Prostate gland (tissue), 2 donors: ENCODE measurements at regions of chr14 and their contacts with region 1.

Region 1: GRCh38 chr14:51395361-51395849 is 155.4 kb downstream of the TMX1 start:
- DNase-seq: peak; percentile 80
- H3K4me3 ChIP-seq: no peak overlapping the region
- H3K27ac ChIP-seq: peak overlapping the region; percentile 56 to 66
- H3K4me1 ChIP-seq: peaks cover 6% of the 10 kb centered on the region
- H3K27me3 ChIP-seq: no peaks in the 10 kb centered on the region
- CTCF ChIP-seq: peak in 1 of 4 experiments; percentile 4
- POLR2A ChIP-seq: no peak

Region 2: GRCh38 chr14:51507906-51508511 is 112.6 kb after region 1 on chr14:
- intact Hi-C with region 1: loop called (anchors 5 kb)
- DNase-seq: peak; percentile 62
- H3K4me3 ChIP-seq: no peak overlapping the region
- H3K27ac ChIP-seq: peak overlapping the region; percentile 58 to 59
- H3K4me1 ChIP-seq: no peaks in the 10 kb centered on the region
- H3K27me3 ChIP-seq: no peaks in the 10 kb centered on the region
- CTCF ChIP-seq: no peak
- POLR2A ChIP-seq: no peak

Region 3: DNA sequence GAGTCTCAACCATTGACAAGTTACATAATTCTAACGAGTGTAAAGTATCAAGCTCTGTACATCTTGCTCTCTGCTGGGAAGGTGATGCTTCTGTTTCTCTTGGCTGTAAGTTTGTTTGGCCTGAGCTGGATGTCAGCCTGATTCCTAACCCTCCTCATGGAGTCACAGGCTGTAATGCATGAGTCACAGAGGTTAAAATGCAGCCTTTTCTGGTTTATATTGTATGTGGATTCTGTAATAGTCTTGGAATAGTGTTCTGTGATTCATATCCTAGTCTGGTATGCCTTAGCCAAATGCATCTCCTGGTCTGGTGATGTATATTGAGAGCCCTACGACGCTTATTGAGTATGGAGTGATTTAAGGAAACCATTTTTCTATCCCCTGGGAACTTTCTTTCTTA is 151.9 kb after region 1 on chr14:
- intact Hi-C with region 1: loop called (anchors 2 kb)
- DNase-seq: peak; percentile 36
- H3K4me3 ChIP-seq: no peak overlapping the region
- H3K27ac ChIP-seq: peak overlapping the region; percentile 4 to 17
- H3K4me1 ChIP-seq: peaks cover 2% of the 10 kb centered on the region
- H3K27me3 ChIP-seq: no peaks in the 10 kb centered on the region
- CTCF ChIP-seq: no peak
- POLR2A ChIP-seq: no peak

Region 4: DNA sequence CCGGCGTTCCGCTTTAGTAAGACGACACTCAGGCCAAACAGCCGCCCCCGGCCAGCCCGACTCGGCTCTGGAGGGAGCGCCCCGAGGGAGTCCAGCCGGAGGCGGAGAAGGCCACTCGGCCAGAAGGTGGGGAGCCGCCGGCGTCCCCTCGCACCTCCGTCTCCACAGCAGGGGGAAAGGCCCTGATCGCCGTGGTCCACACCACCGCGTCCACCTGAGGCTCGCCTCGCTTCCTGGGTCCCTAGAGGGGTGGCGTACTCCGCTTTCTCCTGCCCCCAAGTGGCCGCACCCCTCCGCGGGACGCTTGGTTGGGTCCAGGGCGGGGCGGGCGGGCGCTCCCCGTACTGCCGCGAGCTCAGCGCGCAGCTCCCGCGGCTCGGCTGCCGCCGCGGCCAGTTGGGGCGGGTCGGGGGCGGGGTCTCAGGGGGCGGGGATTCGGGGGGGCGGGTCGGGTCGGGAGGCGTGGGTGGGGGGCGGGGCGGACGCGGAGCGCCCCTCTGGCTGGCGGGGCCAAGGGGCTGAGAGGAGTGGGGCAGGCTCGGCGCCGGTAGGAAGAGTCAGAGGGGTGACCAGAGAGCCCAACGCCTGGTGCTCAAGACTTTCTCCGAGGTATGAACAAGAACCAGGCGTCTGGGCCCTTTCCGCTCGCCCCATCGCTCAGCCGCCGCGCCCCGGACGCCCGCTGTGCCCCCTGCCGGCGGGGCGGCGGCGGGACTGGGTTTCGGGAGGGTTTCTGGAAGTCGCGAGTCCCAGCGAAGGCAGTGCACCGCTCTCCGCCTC is 256.2 kb after region 1 on chr14 and contains the start of gene FRMD6:
- intact Hi-C with region 1: loop called (anchors 5 kb)
- DNase-seq: peak; percentile 83
- H3K4me3 ChIP-seq: peak within 1 kb of the TSS; percentile 76 to 83
- H3K27ac ChIP-seq: peak within 1 kb of the TSS; percentile 96 to 97
- H3K4me1 ChIP-seq: no peaks in the 10 kb centered on the region
- H3K27me3 ChIP-seq: no peaks in the 10 kb centered on the region
- CTCF ChIP-seq: peak; percentile 71 to 83 (median 77)
- POLR2A ChIP-seq: peak; percentile 76
- total RNA-seq, gene FRMD6: 59.1 to 84.0 TPM